IMR-90 (cell line): ENCODE measurements at regions of chr9 and their contacts with region 1.

Region 1: DNA sequence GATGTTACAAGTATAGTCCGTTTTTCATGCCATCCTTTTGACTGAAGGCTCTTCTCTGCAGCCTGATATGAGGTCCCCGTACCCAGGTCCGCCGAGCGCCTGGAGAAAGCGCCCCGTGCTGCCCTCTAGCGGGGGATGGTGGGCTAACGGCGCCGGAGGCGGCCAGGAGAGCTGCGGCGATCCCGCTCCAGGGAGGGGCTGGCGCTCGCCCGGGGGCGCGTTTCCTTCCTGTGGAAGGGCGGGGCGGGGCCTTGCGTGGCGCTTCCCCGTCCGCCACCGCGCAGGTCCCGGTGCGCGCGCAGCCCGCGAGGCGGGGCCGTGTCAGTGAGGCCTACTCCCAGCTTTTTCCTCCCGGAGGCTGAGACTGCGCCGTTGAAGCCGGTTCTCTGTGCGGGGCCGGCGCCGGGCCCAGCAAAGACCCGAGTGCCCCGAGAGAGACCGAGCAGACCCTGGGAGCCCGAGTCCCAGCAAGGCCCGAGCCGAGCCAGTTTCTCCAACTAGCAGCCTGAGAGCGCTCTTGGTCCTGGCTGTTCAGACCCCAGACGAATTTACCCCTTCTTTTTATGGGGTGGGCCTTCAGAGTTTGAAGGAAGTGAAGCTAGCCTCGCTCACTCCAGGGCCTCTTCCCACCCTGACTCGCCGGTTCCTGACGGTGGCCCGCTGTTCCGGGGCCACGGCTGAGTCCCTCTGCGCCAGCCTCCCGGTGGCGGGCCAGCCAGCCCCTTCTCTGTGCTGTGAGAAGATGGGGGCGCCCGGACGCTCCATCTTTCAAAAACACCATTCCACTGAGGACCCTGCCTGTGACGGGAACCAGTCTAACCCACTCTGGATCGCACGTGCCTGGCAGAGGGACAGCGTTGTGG is 9.7 kb upstream of the PHF2 start:
- DNase-seq: peak; percentile 94
- ATAC-seq: peak; percentile 99
- H3K4me3 ChIP-seq: peak overlapping the region; percentile 51
- H3K27ac ChIP-seq: peak overlapping the region; percentile 85
- H3K4me1 ChIP-seq: peaks cover 7% of the 10 kb centered on the region
- H3K27me3 ChIP-seq: no peaks in the 10 kb centered on the region
- CTCF ChIP-seq: peak; percentile 95
- POLR2A ChIP-seq: peak; percentile 93
- RAD21 ChIP-seq: peak; percentile 61

Region 2: GRCh38 chr9:93119953-93120845 is 446.4 kb before region 1 on chr9:
- CTCF ChIA-PET with region 1: no interaction called
- POLR2A ChIA-PET with region 1: no interaction called
- dilution Hi-C with region 1: no loop called
- in situ Hi-C with region 1: loop called (anchors 25 kb)
- intact Hi-C with region 1: no loop called
- DNase-seq: peak; percentile 94
- ATAC-seq: peak; percentile 87
- H3K4me3 ChIP-seq: no peak overlapping the region
- H3K27ac ChIP-seq: peak overlapping the region; percentile 74
- H3K4me1 ChIP-seq: peaks cover 15% of the 10 kb centered on the region
- H3K27me3 ChIP-seq: no peaks in the 10 kb centered on the region
- CTCF ChIP-seq: peak; percentile 50
- POLR2A ChIP-seq: 0 out of 2 replicates have a peak, but pooled peaks have one; percentile 17
- RAD21 ChIP-seq: peak; percentile 42

Region 3: DNA sequence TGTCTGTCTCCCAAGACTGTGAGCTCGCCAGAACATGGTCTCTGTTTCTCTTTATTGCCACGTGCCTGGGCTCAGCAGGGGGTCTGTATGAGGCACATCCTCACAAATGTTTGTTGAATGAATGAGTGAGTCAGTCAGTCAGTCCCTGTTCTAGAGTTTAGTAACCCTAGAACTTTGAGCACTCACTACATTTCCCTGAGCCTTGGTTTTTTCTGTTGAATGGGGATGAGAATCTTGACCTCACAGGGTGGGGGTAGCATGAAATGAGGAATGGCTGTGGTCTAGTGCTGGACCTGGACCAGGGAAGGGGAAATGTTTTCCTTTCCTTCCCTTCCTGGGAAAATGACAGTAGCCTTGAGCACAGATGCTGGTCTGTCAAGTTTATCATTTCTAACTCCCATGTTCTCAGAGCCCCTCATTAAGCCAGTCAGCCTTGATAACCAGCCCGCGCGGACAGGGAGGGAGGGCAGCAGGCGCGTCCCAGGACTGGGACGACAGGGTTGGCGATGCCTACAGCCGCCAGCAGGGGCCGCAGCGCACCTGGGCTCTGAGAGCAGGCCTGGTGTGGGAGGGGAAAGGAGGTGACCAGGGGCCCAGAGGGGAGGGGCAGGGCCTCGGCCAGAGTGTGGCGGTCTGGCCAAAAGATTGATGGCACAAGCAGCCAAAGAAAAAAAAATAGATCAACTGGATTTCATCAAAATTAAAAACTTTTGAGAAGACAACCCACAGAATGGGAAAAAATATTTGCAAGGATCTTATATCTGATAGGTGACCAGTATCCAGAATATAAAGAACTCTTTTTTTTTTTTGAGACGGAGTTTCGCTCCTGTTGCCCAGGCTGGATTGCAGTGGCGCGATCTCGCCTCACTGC is 406.8 kb before region 1 on chr9:
- CTCF ChIA-PET with region 1: no interaction called
- POLR2A ChIA-PET with region 1: no interaction called
- dilution Hi-C with region 1: no loop called
- in situ Hi-C with region 1: no loop called
- intact Hi-C with region 1: loop called (anchors 2 kb)
- DNase-seq: peak; percentile 77
- ATAC-seq: peak; percentile 99
- H3K4me3 ChIP-seq: no peak overlapping the region
- H3K27ac ChIP-seq: no peak overlapping the region; the same call in 1 of the 2 replicates
- H3K4me1 ChIP-seq: peaks cover 3% of the 10 kb centered on the region; the same call in 1 of the 2 replicates
- H3K27me3 ChIP-seq: peaks cover 4% of the 10 kb centered on the region
- CTCF ChIP-seq: peak; percentile 97
- POLR2A ChIP-seq: no peak
- RAD21 ChIP-seq: peak; percentile 94

Region 4: DNA sequence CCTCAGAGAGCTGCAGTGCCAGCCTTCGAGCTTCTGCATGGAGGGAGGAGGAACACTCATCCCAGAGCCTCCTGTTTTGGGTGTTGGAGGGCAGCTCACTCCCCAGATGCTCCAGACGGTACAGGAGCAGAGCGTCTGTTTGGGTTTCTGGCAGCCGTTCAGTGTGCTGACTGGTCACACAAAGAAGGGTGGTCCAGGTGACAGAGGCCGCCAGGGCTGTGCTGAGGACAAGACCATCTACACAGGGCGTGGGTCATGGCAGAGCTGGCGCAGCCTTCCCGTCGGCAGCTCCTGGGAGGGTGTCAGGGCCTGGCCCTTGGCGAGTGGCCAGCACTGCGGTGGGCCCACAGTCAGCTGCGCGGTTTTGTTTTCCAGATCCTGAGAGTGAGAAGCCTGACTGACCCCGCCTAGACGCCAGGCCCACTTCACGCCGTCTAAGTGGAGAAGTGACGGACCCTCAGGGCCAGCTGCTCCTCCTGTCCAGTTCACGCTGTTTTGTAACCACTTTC is 246.6 kb before region 1 on chr9:
- CTCF ChIA-PET with region 1: no interaction called
- POLR2A ChIA-PET with region 1: no interaction called
- dilution Hi-C with region 1: no loop called
- in situ Hi-C with region 1: no loop called
- intact Hi-C with region 1: loop called (anchors 10 kb)
- DNase-seq: no peak
- ATAC-seq: no peak
- H3K4me3 ChIP-seq: no peak overlapping the region
- H3K27ac ChIP-seq: no peak overlapping the region
- H3K4me1 ChIP-seq: no peaks in the 10 kb centered on the region
- H3K27me3 ChIP-seq: peaks cover 8% of the 10 kb centered on the region
- CTCF ChIP-seq: no peak
- POLR2A ChIP-seq: no peak
- RAD21 ChIP-seq: no peak

Region 5: GRCh38 chr9:93468763-93469456 is 97.7 kb before region 1 on chr9:
- CTCF ChIA-PET with region 1: interaction called, 7 read pairs
- POLR2A ChIA-PET with region 1: no interaction called
- dilution Hi-C with region 1: loop called (anchors 10 kb)
- in situ Hi-C with region 1: no loop called
- intact Hi-C with region 1: no loop called
- DNase-seq: peak; percentile 43
- ATAC-seq: peak; percentile 51
- H3K4me3 ChIP-seq: no peak overlapping the region
- H3K27ac ChIP-seq: peak overlapping the region; percentile 54; the same call in 1 of the 2 replicates
- H3K4me1 ChIP-seq: peaks cover 20% of the 10 kb centered on the region
- H3K27me3 ChIP-seq: no peaks in the 10 kb centered on the region
- CTCF ChIP-seq: no peak
- POLR2A ChIP-seq: no peak
- RAD21 ChIP-seq: no peak